Caco-2 (cell line): ENCODE measurements at regions of chr1 and their contacts with region 1.

Region 1: GRCh38 chr1:162035241-162035640 is 11.6 kb upstream of the OLFML2B start:
- DNase-seq: no peak
- H3K4me3 ChIP-seq: no peak overlapping the region
- H3K4me3 Mint-ChIP-seq: no peak overlapping the region
- H3K27ac Mint-ChIP-seq: no peak overlapping the region
- H3K4me1 ChIP-seq: no peaks in the 10 kb centered on the region
- H3K4me1 Mint-ChIP-seq: peaks cover 6% of the 10 kb centered on the region
- H3K27me3 ChIP-seq: no peaks in the 10 kb centered on the region
- H3K27me3 Mint-ChIP-seq: peaks cover 15% of the 10 kb centered on the region
- CTCF ChIP-seq: no peak

Region 2: GRCh38 chr1:161905269-161905884 is 129.9 kb before region 1 on chr1:
- CTCF ChIA-PET with region 1: interaction called, 8 read pairs
- POLR2A ChIA-PET with region 1: no interaction called
- intact Hi-C with region 1: loop called (anchors 2 kb)
- DNase-seq: peak; percentile 44 to 55
- H3K4me3 ChIP-seq: no peak overlapping the region
- H3K4me3 Mint-ChIP-seq: no peak overlapping the region
- H3K27ac Mint-ChIP-seq: no peak overlapping the region
- H3K4me1 ChIP-seq: peaks cover 8% of the 10 kb centered on the region
- H3K4me1 Mint-ChIP-seq: peaks cover 7% of the 10 kb centered on the region
- H3K27me3 ChIP-seq: no peaks in the 10 kb centered on the region
- H3K27me3 Mint-ChIP-seq: no peaks in the 10 kb centered on the region
- CTCF ChIP-seq: peak; percentile 45 to 87

Region 3: GRCh38 chr1:161956097-161956496 is 79.1 kb before region 1 on chr1:
- CTCF ChIA-PET with region 1: interaction called, 4 read pairs
- POLR2A ChIA-PET with region 1: no interaction called
- intact Hi-C with region 1: loop called (anchors 10 kb)
- DNase-seq: no peak
- H3K4me3 ChIP-seq: no peak overlapping the region
- H3K4me3 Mint-ChIP-seq: no peak overlapping the region
- H3K27ac Mint-ChIP-seq: no peak overlapping the region
- H3K4me1 ChIP-seq: no peaks in the 10 kb centered on the region
- H3K4me1 Mint-ChIP-seq: no peaks in the 10 kb centered on the region
- H3K27me3 ChIP-seq: no peaks in the 10 kb centered on the region
- H3K27me3 Mint-ChIP-seq: no peaks in the 10 kb centered on the region
- CTCF ChIP-seq: no peak

Region 4: DNA sequence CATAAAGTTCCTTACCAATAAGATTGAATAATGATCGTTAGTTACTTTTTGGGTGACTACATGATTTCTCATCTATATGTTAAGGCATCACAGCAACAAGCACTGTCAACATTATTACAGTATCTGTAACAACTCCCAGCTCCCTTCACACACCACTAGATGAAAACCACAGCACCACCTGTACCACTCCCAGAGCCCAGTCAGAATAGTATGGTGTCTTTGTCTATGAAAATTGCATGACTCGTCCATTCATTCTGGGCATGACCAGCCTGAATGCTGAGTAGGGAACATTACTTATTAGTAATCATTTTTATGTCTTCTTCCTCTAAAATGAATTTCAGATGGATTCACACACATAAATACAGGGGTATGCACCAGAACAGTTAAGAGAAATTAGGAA is 18.6 kb before region 1 on chr1:
- CTCF ChIA-PET with region 1: no interaction called
- POLR2A ChIA-PET with region 1: no interaction called
- intact Hi-C with region 1: no loop called
- DNase-seq: no peak
- H3K4me3 ChIP-seq: no peak overlapping the region
- H3K4me3 Mint-ChIP-seq: no peak overlapping the region
- H3K27ac Mint-ChIP-seq: no peak overlapping the region
- H3K4me1 ChIP-seq: no peaks in the 10 kb centered on the region; the same call in 1 of the 2 replicates
- H3K4me1 Mint-ChIP-seq: no peaks in the 10 kb centered on the region
- H3K27me3 ChIP-seq: peaks cover 4% of the 10 kb centered on the region; the same call in 1 of the 2 replicates
- H3K27me3 Mint-ChIP-seq: peaks cover 3% of the 10 kb centered on the region
- CTCF ChIP-seq: no peak

Region 5: GRCh38 chr1:162113419-162113818 is 78.2 kb after region 1 on chr1:
- CTCF ChIA-PET with region 1: no interaction called
- POLR2A ChIA-PET with region 1: no interaction called
- intact Hi-C with region 1: no loop called
- DNase-seq: no peak
- H3K4me3 ChIP-seq: no peak overlapping the region
- H3K4me3 Mint-ChIP-seq: no peak overlapping the region
- H3K27ac Mint-ChIP-seq: no peak overlapping the region
- H3K4me1 ChIP-seq: peaks cover 2% of the 10 kb centered on the region; the same call in 1 of the 2 replicates
- H3K4me1 Mint-ChIP-seq: no peaks in the 10 kb centered on the region
- H3K27me3 ChIP-seq: no peaks in the 10 kb centered on the region
- H3K27me3 Mint-ChIP-seq: no peaks in the 10 kb centered on the region
- CTCF ChIP-seq: no peak